ENCODE measurements at regions of chr14 and their contacts with region 1.

Region 1: DNA sequence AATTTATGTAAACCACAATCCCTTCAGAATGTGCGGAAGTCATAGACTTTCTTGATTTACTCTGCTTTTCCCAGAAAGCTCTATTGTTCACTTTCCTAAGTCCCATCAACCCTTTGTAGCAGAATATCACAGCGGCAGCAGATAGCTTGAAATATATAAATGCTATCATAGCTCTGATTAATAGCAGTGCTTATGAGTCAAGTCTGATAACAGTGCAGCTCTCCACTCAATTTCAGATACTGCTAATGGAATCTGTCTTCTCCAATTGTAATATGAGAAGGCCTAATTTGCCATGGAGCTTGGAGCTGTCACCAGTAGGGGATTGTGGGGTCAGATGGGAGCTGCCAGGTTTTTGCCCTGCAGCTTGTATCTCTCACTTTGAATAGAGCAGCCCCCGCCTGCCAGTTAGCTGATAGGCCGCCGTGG is 10.9 kb downstream of the TMEM260 start:
- DNase-seq: no peak
- CTCF ChIP-seq: no peak

Region 2: GRCh38 chr14:56390859-56391258 is 199.7 kb before region 1 on chr14:
- CTCF ChIA-PET with region 1: no interaction called
- POLR2A ChIA-PET with region 1: no interaction called
- DNase-seq: no peak
- CTCF ChIP-seq: peak; percentile 4

Region 3: DNA sequence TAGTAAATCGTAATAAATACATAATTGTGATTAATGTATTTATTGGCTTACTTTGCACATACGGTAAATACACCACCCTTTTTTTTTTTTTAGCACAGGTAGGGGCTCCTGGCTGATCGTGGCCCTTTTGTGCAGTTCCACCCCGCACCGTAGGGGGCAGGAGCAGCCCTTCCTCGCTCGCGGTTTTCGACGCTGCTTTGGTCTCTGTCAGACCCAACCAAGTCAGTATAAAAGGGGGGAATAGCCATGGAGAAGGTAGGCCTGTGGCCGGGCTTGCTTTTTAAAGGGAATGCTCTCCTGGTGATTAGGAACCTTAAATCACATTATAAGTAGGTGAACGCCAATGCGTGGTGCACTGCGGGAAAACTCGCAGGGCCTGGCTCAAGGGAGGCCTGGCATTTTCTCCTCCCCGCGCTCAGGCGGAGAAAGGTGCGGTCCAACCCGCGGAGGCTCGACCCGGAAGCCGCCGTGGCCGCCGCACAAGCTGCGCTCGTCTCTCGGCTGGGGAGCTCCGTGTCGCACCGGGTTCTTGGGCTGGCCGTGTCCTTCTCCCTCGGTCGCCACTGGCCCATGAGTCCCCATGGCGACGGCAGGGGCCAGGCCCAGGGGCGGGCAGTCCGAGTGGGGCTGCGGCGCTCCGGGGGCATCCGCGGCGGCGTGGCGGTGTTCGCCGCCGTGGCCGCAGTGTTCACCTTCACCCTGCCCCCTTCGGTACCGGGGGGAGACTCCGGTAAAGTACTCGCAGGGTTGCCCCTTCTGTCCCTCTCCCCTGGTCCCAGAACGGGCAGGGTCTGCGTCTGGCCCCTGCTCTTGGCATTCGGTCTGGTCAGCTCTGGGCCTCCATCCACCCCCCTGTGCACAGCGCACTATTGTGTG is 11.0 kb before region 1 on chr14 and contains the start of gene TMEM260:
- CTCF ChIA-PET with region 1: interaction called, 42 read pairs
- POLR2A ChIA-PET with region 1: interaction called, 3 read pairs
- DNase-seq: peak; percentile 90
- CTCF ChIP-seq: peak; percentile 89

Region 4: DNA sequence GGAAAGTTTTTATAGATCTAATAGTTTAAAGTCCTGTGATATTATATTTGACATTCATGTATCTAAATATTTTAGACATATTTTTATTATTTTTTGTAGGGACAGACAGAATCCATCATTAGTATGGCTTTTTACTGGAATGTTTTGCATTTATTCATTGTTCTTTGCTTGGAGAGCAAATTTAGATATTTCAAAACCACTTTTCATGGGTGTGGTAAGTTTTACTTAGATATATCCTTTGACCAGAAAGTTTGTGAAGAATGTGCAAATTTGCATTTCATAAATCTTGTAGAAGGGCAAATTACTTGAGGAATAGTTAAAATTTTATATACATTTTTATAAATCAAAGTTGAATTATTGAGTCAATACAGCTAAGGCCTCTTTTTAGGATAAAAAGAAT is 26.5 kb after region 1 on chr14:
- CTCF ChIA-PET with region 1: no interaction called
- POLR2A ChIA-PET with region 1: no interaction called
- DNase-seq: no peak
- CTCF ChIP-seq: no peak

Region 5: GRCh38 chr14:56630707-56631106 is 40.2 kb after region 1 on chr14:
- CTCF ChIA-PET with region 1: no interaction called
- POLR2A ChIA-PET with region 1: no interaction called
- DNase-seq: no peak
- CTCF ChIP-seq: no peak